GM12878 (cell line): ENCODE measurements at regions of chr18 and their contacts with region 1.

Region 1: GRCh38 chr18:23967321-23968089 is 47.0 kb upstream of the TTC39C start:
- DNase-seq: peak; percentile 53
- ATAC-seq: peak; percentile 72
- H3K4me3 ChIP-seq: 0 out of 2 replicates have a peak overlapping the region, but pooled peaks have one; percentile 9
- H3K27ac ChIP-seq: no peak overlapping the region; the same call in 1 of the 2 replicates
- H3K4me1 ChIP-seq: peaks cover 37% of the 10 kb centered on the region
- H3K27me3 ChIP-seq: no peaks in the 10 kb centered on the region
- CTCF ChIP-seq: no peak
- EP300 ChIP-seq: no peak
- POLR2A ChIP-seq: no peak
- RAD21 ChIP-seq: no peak

Region 2: DNA sequence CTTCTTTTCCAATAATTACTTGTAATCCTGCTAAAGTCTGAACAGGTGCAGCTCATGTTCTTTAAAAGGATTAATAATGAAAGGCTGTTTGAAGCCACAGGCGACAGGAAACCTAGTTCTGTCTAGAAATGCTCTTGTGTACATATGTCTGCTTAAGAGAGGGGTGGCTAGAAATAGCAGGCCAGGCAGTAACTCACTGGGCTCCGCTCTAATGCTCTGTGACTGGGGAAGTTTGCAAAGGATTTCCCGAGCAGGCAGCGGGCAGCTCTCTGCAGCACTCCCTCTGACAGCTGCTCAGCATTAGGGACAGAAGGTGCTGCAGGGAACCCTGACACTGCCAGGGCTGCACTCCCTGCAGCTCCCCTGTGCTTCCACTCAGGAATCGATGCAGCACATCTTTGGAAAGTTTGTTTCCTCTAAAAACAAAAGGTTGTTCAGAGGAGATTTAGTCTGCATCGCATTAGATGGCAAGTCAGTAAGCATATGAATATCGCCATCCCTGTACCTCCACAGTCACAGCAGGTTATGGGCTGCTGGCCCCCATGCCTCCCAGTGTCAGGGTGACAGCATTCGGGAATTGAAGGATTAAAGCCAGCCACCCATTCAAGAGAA is 14.0 kb after region 1 on chr18:
- CTCF ChIA-PET with region 1: interaction called, 4 read pairs
- POLR2A ChIA-PET with region 1: interaction called, 7 read pairs
- RAD21 ChIA-PET with region 1: interaction called, 7 read pairs
- SMC1A ChIA-PET with region 1: interaction called, 10 read pairs
- in situ Hi-C with region 1: no loop called
- intact Hi-C with region 1: no loop called
- DNase-seq: peak; percentile 59
- ATAC-seq: peak; percentile 95
- H3K4me3 ChIP-seq: peak overlapping the region; percentile 50
- H3K27ac ChIP-seq: peak overlapping the region; percentile 51
- H3K4me1 ChIP-seq: peaks cover 30% of the 10 kb centered on the region
- H3K27me3 ChIP-seq: no peaks in the 10 kb centered on the region
- CTCF ChIP-seq: no peak
- EP300 ChIP-seq: no peak
- POLR2A ChIP-seq: no peak
- RAD21 ChIP-seq: peak; percentile 35; the same call in 1 of the 2 replicates

Region 3: GRCh38 chr18:24014062-24014985 is 46.8 kb after region 1 on chr18 and contains the start of gene TTC39C:
- CTCF ChIA-PET with region 1: interaction called, 5 read pairs
- POLR2A ChIA-PET with region 1: interaction called, 3 read pairs
- RAD21 ChIA-PET with region 1: interaction called, 8 read pairs
- SMC1A ChIA-PET with region 1: interaction called, 11 read pairs
- in situ Hi-C with region 1: no loop called
- intact Hi-C with region 1: loop called (anchors 2 kb)
- DNase-seq: no peak
- ATAC-seq: peak; percentile 66
- H3K4me3 ChIP-seq: peak within 1 kb of the TSS; percentile 88
- H3K27ac ChIP-seq: peak within 1 kb of the TSS; percentile 86
- H3K4me1 ChIP-seq: peaks cover 61% of the 10 kb centered on the region
- H3K27me3 ChIP-seq: no peaks in the 10 kb centered on the region
- CTCF ChIP-seq: no peak
- EP300 ChIP-seq: peak in 1 of 2 experiments; percentile 18; a peak in 1 of 4 replicates
- POLR2A ChIP-seq: peak; percentile 81
- RAD21 ChIP-seq: no peak
- polyA plus RNA-seq, gene TTC39C: 21.1 to 37.2 TPM

Region 4: GRCh38 chr18:24112874-24113615 is 145.5 kb after region 1 on chr18:
- CTCF ChIA-PET with region 1: interaction called, 8 read pairs
- POLR2A ChIA-PET with region 1: no interaction called
- RAD21 ChIA-PET with region 1: interaction called, 3 read pairs
- SMC1A ChIA-PET with region 1: interaction called, 10 read pairs
- in situ Hi-C with region 1: loop called (anchors 5 kb)
- intact Hi-C with region 1: no loop called
- DNase-seq: no peak
- ATAC-seq: no peak
- H3K4me3 ChIP-seq: no peak overlapping the region
- H3K27ac ChIP-seq: no peak overlapping the region
- H3K4me1 ChIP-seq: no peaks in the 10 kb centered on the region
- H3K27me3 ChIP-seq: no peaks in the 10 kb centered on the region
- CTCF ChIP-seq: no peak
- EP300 ChIP-seq: no peak
- POLR2A ChIP-seq: no peak
- RAD21 ChIP-seq: no peak